Gastrocnemius medialis (tissue), 4 donors: ENCODE measurements at regions of chrX and their contacts with region 1.

Region 1: DNA sequence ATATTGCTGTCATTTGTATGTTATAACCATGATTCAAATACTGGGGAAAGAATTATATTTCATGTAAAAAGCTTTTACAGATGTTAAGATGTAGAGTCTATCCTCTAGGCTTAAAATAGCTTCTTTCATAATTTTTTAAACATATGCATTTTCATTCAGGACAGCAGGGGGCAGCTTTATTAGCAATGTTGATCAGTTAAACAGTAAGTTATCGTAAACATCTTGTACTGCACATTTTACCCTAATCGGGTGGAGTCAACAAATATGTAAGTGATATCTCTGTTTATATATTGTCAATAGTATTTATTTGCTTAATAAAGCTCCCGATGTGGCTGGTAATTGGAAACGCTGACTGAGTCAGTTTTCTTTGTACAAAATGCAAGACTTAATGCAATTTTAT is 142.5 kb upstream of the MED14 start:
- DNase-seq: no peak
- ATAC-seq: no peak
- H3K4me3 ChIP-seq: no peak overlapping the region
- H3K27ac ChIP-seq: no peak overlapping the region
- H3K4me1 ChIP-seq: peaks cover 0 to 4% of the 10 kb centered on the region in 2 donors
- H3K27me3 ChIP-seq: peaks cover 0 to 2% (median 0%) of the 10 kb centered on the region in 3 donors
- CTCF ChIP-seq: peak in 3 of 5 experiments; percentile 43 to 49 (median 45)
- POLR2A ChIP-seq: no peak

Region 2: GRCh38 chrX:41010188-41010846 is 132.4 kb after region 1 on chrX:
- in situ Hi-C with region 1: no loop called
- intact Hi-C with region 1: loop called (anchors 10 kb)
- DNase-seq: peak; percentile 44 to 73
- ATAC-seq: peak; percentile 93 to 96
- H3K4me3 ChIP-seq: peak overlapping the region; percentile 44 to 61 (median 48)
- H3K27ac ChIP-seq: peak overlapping the region; percentile 60 to 90 (median 82)
- H3K4me1 ChIP-seq: peaks cover 0 to 9% of the 10 kb centered on the region in 2 donors
- H3K27me3 ChIP-seq: peaks cover 0 to 2% (median 0%) of the 10 kb centered on the region in 3 donors
- CTCF ChIP-seq: no peak
- POLR2A ChIP-seq: peak; percentile 33 to 35